Activated CD4-positive, alpha-beta memory T cell treated with anti-CD3 and anti-CD28 coated beads for 36 hours (primary cell): ENCODE measurements at regions of chr10 and their contacts with region 1.

Region 1: GRCh38 chr10:118341791-118342637 is at the start of gene FAM204A:
- DNase-seq: peak; percentile 98
- H3K4me3 Mint-ChIP-seq: peak within 1 kb of the TSS; percentile 92
- H3K27ac Mint-ChIP-seq: peak within 1 kb of the TSS; percentile 87
- H3K4me1 Mint-ChIP-seq: peaks cover 42% of the 10 kb centered on the region
- H3K27me3 Mint-ChIP-seq: no peaks in the 10 kb centered on the region
- total RNA-seq, gene FAM204A: 63.5 to 64.8 TPM

Region 2: DNA sequence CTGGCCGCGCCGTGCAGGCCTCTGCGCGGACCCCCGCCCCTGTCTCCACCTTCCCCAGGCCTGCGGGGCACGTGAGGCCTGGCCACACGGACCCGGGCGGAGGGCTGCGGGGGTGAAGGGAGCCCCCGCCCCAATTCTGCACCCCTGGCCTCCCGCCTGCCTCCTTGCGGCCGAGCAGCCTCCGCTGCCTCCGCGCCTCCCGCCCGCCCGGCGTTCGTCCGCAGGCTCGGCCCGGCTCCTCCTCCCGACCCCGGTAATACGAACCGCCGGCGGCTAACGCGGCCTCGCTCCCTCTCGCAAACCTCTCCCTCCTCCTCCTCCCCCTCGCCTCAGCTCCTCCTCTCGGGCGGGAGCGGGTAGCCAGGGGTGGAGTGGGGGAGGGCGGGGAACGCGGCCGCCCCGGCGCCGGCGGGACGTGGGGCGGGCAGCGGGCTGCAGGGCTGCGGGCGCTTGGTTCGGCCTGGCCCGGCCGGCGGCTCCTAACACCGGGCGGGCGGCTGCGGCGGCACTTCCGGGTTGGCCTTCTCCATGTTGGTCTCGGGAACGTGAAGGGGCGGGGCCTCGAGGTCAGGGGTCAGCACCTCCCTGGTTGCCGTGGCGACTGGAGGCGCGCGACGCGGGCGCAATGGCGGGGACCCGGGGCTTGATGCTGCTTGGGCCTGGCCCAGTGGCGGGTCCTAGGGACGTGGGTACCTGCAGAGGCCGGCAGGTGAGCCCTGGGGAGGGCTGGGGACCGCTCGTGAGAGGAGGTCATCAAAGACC is 295.4 kb before region 1 on chr10 and contains the start of gene RAB11FIP2:
- CTCF ChIA-PET with region 1: no interaction called
- POLR2A ChIA-PET with region 1: no interaction called
- intact Hi-C with region 1: loop called (anchors 2 kb)
- DNase-seq: peak; percentile 96
- H3K4me3 Mint-ChIP-seq: peak within 1 kb of the TSS; percentile 89
- H3K27ac Mint-ChIP-seq: peak within 1 kb of the TSS; percentile 56
- H3K4me1 Mint-ChIP-seq: peaks cover 36% of the 10 kb centered on the region
- H3K27me3 Mint-ChIP-seq: no peaks in the 10 kb centered on the region
- total RNA-seq, gene RAB11FIP2: 7.5 to 9.4 TPM

Region 3: GRCh38 chr10:118423800-118424479 is 81.9 kb after region 1 on chr10:
- CTCF ChIA-PET with region 1: no interaction called
- POLR2A ChIA-PET with region 1: no interaction called
- intact Hi-C with region 1: loop called (anchors 5 kb)
- DNase-seq: peak; percentile 80
- H3K4me3 Mint-ChIP-seq: no peak overlapping the region
- H3K27ac Mint-ChIP-seq: no peak overlapping the region
- H3K4me1 Mint-ChIP-seq: peaks cover 3% of the 10 kb centered on the region
- H3K27me3 Mint-ChIP-seq: peaks cover 7% of the 10 kb centered on the region

Region 4: DNA sequence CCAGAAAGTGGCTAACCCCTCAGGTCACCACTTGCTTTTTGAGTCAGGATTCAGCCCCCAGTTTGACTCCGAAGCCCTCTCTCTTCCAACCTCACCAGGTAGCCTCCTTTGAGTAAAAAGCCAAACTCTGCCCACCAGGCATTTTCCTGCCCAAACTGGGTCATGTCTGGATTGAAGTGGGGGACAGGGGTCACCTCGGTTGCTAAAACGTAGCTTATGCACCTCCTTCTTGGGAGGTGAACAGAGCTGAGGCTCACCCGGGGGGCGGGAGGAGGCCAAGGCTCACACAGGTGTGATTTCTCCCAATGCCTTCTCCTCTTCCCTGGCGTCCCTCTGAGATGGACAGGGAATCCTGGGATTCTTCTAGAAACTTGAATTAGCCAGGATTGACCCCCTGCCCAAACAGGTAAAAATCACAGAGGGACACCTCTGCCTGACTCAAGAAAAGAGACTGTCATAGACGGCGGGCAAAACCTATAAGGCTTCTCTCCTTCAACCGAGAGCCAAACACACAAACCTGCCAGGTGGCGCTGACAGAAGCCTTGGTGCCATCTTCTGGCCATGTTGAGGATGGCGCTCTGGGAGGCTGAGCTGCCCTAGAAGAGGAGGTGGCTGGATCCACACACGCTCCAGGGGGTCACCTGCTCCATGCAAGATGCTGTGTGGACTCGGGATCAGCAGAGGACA is 201.8 kb after region 1 on chr10:
- CTCF ChIA-PET with region 1: no interaction called
- POLR2A ChIA-PET with region 1: no interaction called
- intact Hi-C with region 1: no loop called
- DNase-seq: peak; percentile 60
- H3K4me3 Mint-ChIP-seq: no peak overlapping the region
- H3K27ac Mint-ChIP-seq: no peak overlapping the region
- H3K4me1 Mint-ChIP-seq: no peaks in the 10 kb centered on the region
- H3K27me3 Mint-ChIP-seq: peaks cover 36% of the 10 kb centered on the region